ENCODE measurements at regions of chr3 and their contacts with region 1.

Region 1: GRCh38 chr3:51967384-51968169 is at the start of gene PCBP4:
- DNase-seq: peak; percentile 62
- ATAC-seq: peak; percentile 52
- H3K4me3 Mint-ChIP-seq: peak within 1 kb of the TSS; percentile 75
- H3K27ac Mint-ChIP-seq: peak within 1 kb of the TSS; percentile 31
- H3K4me1 Mint-ChIP-seq: peaks cover 20% of the 10 kb centered on the region
- H3K27me3 Mint-ChIP-seq: no peaks in the 10 kb centered on the region
- total RNA-seq, gene PCBP4: 12.5 to 13.6 TPM

Region 2: GRCh38 chr3:51982782-51983577 is 15.4 kb after region 1 on chr3 and contains the start of gene ACY1:
- CTCF ChIA-PET with region 1: interaction called, 12 read pairs
- POLR2A ChIA-PET with region 1: no interaction called
- intact Hi-C with region 1: no loop called
- DNase-seq: peak; percentile 90
- ATAC-seq: peak; percentile 88
- H3K4me3 Mint-ChIP-seq: peak within 1 kb of the TSS; percentile 96
- H3K27ac Mint-ChIP-seq: peak within 1 kb of the TSS; percentile 96
- H3K4me1 Mint-ChIP-seq: peaks cover 20% of the 10 kb centered on the region
- H3K27me3 Mint-ChIP-seq: no peaks in the 10 kb centered on the region
- total RNA-seq, gene ACY1: 61.5 to 90.0 TPM